ENCODE measurements at regions of chr5 and their contacts with region 1.

Region 1: DNA sequence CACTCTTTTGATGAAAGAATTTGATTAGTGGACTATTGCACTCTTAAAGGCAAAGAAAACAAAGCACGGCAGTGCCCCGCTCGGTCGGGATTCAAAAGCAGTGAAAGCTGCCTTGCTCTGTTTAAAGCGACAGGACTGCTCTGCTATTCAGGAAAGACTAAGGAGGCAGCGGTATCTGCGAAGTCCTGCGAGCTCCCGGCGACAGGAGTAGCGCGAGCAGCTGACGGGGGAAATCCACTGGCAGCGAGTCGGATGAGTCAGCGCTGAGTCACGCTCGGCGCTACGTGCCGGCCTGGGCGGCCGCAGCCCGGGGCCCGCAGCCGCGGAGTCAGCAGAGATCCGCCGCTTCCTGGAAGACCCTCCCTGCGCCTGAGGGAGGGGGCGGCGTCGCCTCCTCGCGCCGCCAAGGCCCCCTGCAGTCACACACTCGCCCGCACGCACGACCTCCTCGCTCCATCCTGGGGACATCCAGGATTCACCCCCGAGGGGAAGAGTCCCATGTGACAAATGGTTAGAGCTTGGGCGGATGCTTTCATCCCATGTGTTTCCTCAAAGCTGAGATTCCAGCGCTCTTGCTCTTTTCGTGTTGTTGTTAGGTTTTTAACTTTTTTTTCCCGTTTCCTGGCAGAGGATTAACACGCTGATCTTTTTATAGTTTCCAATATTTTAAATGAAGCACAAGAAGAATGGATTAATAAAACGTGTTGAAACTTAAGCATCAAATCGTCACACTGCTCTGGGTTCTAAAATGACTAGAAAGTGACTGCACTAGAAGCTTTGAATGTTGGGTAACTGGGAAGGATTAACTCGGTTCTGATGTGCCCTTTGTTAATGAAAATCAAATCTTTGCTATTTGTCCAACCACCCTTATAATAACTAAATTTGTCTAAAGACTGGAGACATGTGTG is 102.5 kb downstream of the ARRDC3 start:
- DNase-seq: peak; percentile 96 to 98 (median 96)
- H3K4me3 ChIP-seq: peak overlapping the region; percentile 39 to 76 (median 45)
- H3K4me3 Mint-ChIP-seq: peak overlapping the region; percentile 89 to 90
- H3K27ac ChIP-seq: peak overlapping the region; percentile 89 to 99
- H3K27ac Mint-ChIP-seq: peak overlapping the region; percentile 96 to 100 (median 98)
- H3K4me1 ChIP-seq: peaks cover 25 to 36% of the 10 kb centered on the region in 2 donors
- H3K4me1 Mint-ChIP-seq: peaks cover 38% of the 10 kb centered on the region
- H3K27me3 ChIP-seq: peaks cover 0 to 3% of the 10 kb centered on the region in 2 donors
- H3K27me3 Mint-ChIP-seq: peaks cover 6 to 20% (median 7%) of the 10 kb centered on the region in 3 donors
- CTCF ChIP-seq: no peak

Region 2: GRCh38 chr5:91183737-91184136 is 96.9 kb before region 1 on chr5:
- intact Hi-C with region 1: loop called in 1 of 2 experiments (anchors 5 kb)
- DNase-seq: peak in 2 of 3 donors; percentile 54 to 71
- H3K4me3 ChIP-seq: peak overlapping the region in 1 of 3 experiments; percentile 35
- H3K4me3 Mint-ChIP-seq: peak overlapping the region in 1 of 2 donors; percentile 71
- H3K27ac ChIP-seq: peak overlapping the region in 1 of 2 donors; percentile 85
- H3K27ac Mint-ChIP-seq: peak overlapping the region; percentile 89 to 96 (median 94)
- H3K4me1 ChIP-seq: peaks cover 45 to 66% of the 10 kb centered on the region in 2 donors
- H3K4me1 Mint-ChIP-seq: peaks cover 52% of the 10 kb centered on the region
- H3K27me3 ChIP-seq: no peaks in the 10 kb centered on the region
- H3K27me3 Mint-ChIP-seq: no peaks in the 10 kb centered on the region
- CTCF ChIP-seq: no peak

Region 3: GRCh38 chr5:91232523-91232922 is 48.1 kb before region 1 on chr5:
- intact Hi-C with region 1: loop called in 1 of 2 experiments (anchors 5 kb)
- DNase-seq: no peak
- H3K4me3 ChIP-seq: no peak overlapping the region
- H3K4me3 Mint-ChIP-seq: no peak overlapping the region
- H3K27ac ChIP-seq: no peak overlapping the region
- H3K27ac Mint-ChIP-seq: no peak overlapping the region
- H3K4me1 ChIP-seq: peaks cover 20 to 28% of the 10 kb centered on the region in 2 donors
- H3K4me1 Mint-ChIP-seq: peaks cover 25% of the 10 kb centered on the region
- H3K27me3 ChIP-seq: no peaks in the 10 kb centered on the region
- H3K27me3 Mint-ChIP-seq: peaks cover 0 to 2% (median 0%) of the 10 kb centered on the region in 3 donors
- CTCF ChIP-seq: no peak

Region 4: GRCh38 chr5:91296691-91297143 is 16.1 kb after region 1 on chr5:
- intact Hi-C with region 1: no loop called
- DNase-seq: peak in 1 of 3 donors; percentile 40
- H3K4me3 ChIP-seq: no peak overlapping the region
- H3K4me3 Mint-ChIP-seq: no peak overlapping the region
- H3K27ac ChIP-seq: no peak overlapping the region
- H3K27ac Mint-ChIP-seq: peak overlapping the region in 3 of 7 donors; percentile 3 to 80 (median 20)
- H3K4me1 ChIP-seq: peaks cover 22 to 30% of the 10 kb centered on the region in 2 donors
- H3K4me1 Mint-ChIP-seq: peaks cover 32% of the 10 kb centered on the region
- H3K27me3 ChIP-seq: no peaks in the 10 kb centered on the region
- H3K27me3 Mint-ChIP-seq: peaks cover 0 to 3% (median 0%) of the 10 kb centered on the region in 3 donors
- CTCF ChIP-seq: no peak

Region 5: GRCh38 chr5:91311697-91312501 is 31.3 kb after region 1 on chr5:
- intact Hi-C with region 1: loop called (anchors 2 kb)
- DNase-seq: peak; percentile 93 to 97 (median 97)
- H3K4me3 ChIP-seq: peak overlapping the region; percentile 16 to 70 (median 29)
- H3K4me3 Mint-ChIP-seq: peak overlapping the region; percentile 60 to 87
- H3K27ac ChIP-seq: peak overlapping the region; percentile 97 to 99
- H3K27ac Mint-ChIP-seq: peak overlapping the region; percentile 97 to 100 (median 99)
- H3K4me1 ChIP-seq: peaks cover 82 to 86% of the 10 kb centered on the region in 2 donors
- H3K4me1 Mint-ChIP-seq: peaks cover 78% of the 10 kb centered on the region
- H3K27me3 ChIP-seq: no peaks in the 10 kb centered on the region
- H3K27me3 Mint-ChIP-seq: no peaks in the 10 kb centered on the region
- CTCF ChIP-seq: no peak

Region 6: GRCh38 chr5:91383027-91383955 is 102.7 kb after region 1 on chr5 and contains the start of gene ARRDC3:
- intact Hi-C with region 1: loop called (anchors 5 to 10 kb)
- DNase-seq: peak; percentile 92 to 96 (median 93)
- H3K4me3 ChIP-seq: peak within 1 kb of the TSS; percentile 88 to 100 (median 98)
- H3K4me3 Mint-ChIP-seq: peak within 1 kb of the TSS; percentile 97 to 98
- H3K27ac ChIP-seq: peak within 1 kb of the TSS; percentile 99 to 100
- H3K27ac Mint-ChIP-seq: peak within 1 kb of the TSS; percentile 88 to 99 (median 97)
- H3K4me1 ChIP-seq: peaks cover 20 to 25% of the 10 kb centered on the region in 2 donors
- H3K4me1 Mint-ChIP-seq: peaks cover 15% of the 10 kb centered on the region
- H3K27me3 ChIP-seq: no peaks in the 10 kb centered on the region
- H3K27me3 Mint-ChIP-seq: no peaks in the 10 kb centered on the region
- CTCF ChIP-seq: no peak
- polyA plus RNA-seq, gene ARRDC3: 43.3 to 68.0 (median 64.6) TPM

Measured in CD14-positive monocyte (primary cell).